GM23248 (cell line): ENCODE measurements at regions of chr3 and their contacts with region 1.

Region 1: GRCh38 chr3:13479581-13480339 is at the start of gene HDAC11:
- DNase-seq: peak; percentile 99
- H3K4me3 ChIP-seq: peak within 1 kb of the TSS; percentile 78
- H3K27ac ChIP-seq: peak within 1 kb of the TSS; percentile 59
- H3K4me1 ChIP-seq: peaks cover 3% of the 10 kb centered on the region; the same call in 1 of the 2 replicates
- H3K27me3 ChIP-seq: no peaks in the 10 kb centered on the region
- total RNA-seq, gene HDAC11: 8.7 and 12.2 TPM in 2 replicates

Region 2: DNA sequence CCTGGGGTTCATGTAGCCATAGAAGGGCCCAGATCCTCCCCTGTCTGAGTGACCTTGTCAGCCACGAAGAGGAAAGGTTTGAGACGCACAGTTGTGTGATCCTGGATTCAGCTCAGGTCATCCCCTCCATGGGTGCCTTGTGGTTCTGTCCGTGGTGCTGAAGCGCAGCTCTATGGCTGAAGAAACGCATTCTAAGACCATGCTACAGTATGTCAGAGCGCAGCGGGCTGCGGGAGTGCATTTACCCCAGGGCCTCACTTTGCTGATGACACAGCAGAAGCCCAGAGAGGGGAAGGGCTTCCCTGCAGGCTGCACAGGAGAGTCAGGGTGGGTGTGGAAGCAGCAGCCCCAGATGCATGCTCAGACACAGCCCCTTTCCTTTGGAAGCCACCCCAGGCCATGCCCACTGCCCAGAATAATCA is 337.8 kb before region 1 on chr3:
- in situ Hi-C with region 1: no loop called
- DNase-seq: peak; percentile 49
- H3K4me3 ChIP-seq: no peak overlapping the region
- H3K27ac ChIP-seq: no peak overlapping the region
- H3K4me1 ChIP-seq: no peaks in the 10 kb centered on the region
- H3K27me3 ChIP-seq: no peaks in the 10 kb centered on the region

Region 3: GRCh38 chr3:13895155-13896105 is 415.7 kb after region 1 on chr3:
- in situ Hi-C with region 1: loop called (anchors 25 kb)
- DNase-seq: peak; percentile 98
- H3K4me3 ChIP-seq: peak overlapping the region; percentile 82
- H3K27ac ChIP-seq: no peak overlapping the region
- H3K4me1 ChIP-seq: 0 out of 2 replicates have a peak, but pooled peaks cover 7% of the 10 kb centered on the region
- H3K27me3 ChIP-seq: peaks cover 3% of the 10 kb centered on the region; the same call in 1 of the 2 replicates